Mucosa of descending colon (tissue), 3 donors: ENCODE measurements at regions of chr18 and their contacts with region 1.

Region 1: GRCh38 chr18:2571200-2572143 is at the starts of genes METTL4 and NDC80:
- DNase-seq: peak; percentile 88 to 91 (median 90)
- ATAC-seq: peak; percentile 94
- H3K4me3 ChIP-seq: peak within 1 kb of the TSS; percentile 47
- H3K4me1 ChIP-seq: peaks cover 8% of the 10 kb centered on the region
- CTCF ChIP-seq: no peak
- total RNA-seq, gene METTL4: 7.6 to 13.6 (median 10.6) TPM
- total RNA-seq, gene NDC80: 1.5 to 11.6 (median 3.1) TPM

Region 2: DNA sequence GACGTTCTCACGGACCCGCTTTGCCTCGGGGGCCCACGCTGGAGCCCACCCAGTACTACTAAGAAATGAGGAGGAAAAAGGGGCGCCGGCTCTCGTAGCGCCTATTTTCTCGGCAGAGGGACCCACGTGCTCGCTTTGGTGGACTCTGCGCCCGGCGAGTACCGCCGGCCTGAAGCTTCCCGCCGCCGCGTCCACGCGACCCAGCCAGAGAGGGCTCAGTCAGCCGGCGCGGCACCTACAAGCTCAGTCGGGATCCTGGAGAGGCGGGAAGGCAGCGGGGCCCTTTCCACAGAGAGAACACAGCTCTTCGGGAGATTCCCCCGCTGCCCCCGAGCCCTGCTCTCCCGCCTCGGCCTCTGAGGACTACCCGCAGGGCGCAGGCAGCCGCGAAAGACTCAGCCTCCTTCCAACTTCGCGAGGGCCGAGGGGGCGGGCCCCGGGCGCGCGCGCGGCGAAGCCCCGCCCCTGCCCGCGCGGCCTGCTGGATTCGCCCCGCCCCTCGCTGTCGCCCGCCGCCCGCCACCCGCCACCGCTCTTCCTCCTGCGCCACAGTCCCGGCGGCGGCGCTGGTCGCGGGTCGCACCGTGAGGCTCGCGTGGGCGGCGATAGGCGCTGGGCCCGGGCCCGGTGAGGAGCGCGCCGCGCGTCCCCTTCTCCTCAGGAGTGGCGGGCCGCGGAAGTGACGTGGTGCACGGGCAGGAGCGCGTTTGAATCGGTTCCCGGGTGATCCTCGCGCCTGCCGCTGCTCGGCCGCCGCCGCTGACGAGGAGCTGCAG is 83.9 kb after region 1 on chr18 and contains the start of gene SMCHD1:
- intact Hi-C with region 1: loop called in 1 of 2 experiments (anchors 10 kb)
- DNase-seq: peak; percentile 88 to 94 (median 93)
- ATAC-seq: peak; percentile 88
- H3K4me3 ChIP-seq: peak within 1 kb of the TSS; percentile 98
- H3K4me1 ChIP-seq: peaks cover 36% of the 10 kb centered on the region
- CTCF ChIP-seq: no peak
- total RNA-seq, gene SMCHD1: 66.4 to 94.3 (median 83.4) TPM

Region 3: DNA sequence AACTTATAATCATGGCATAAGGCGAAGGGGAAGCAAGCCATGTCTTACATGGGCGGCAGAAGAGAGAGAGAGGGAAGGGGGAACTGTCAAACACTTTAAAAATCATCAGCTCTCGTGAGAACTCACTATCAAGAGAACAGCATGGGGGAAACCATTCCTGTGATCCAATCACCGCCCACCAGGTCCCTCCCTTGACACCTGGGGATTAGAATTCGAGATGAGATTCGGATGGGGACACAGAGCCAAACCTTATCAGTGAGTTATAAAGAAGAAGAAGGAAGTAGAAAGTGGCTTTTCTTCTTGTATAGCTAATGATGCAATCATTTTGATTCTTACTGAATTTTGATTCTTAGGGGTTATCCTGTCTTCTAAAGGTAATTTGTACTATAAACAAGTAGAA is 135.4 kb after region 1 on chr18:
- intact Hi-C with region 1: no loop called
- DNase-seq: no peak
- ATAC-seq: no peak
- H3K4me3 ChIP-seq: no peak overlapping the region
- H3K4me1 ChIP-seq: no peaks in the 10 kb centered on the region
- CTCF ChIP-seq: no peak